MCF 10A (cell line): ENCODE measurements at regions of chr6 and their contacts with region 1.

Region 1: GRCh38 chr6:51350308-51350904 is 531.7 kb downstream of the TFAP2B start:
- DNase-seq: peak; percentile 30
- H3K4me3 Mint-ChIP-seq: no peak overlapping the region
- H3K27ac Mint-ChIP-seq: no peak overlapping the region
- H3K4me1 Mint-ChIP-seq: peaks cover 6% of the 10 kb centered on the region
- H3K27me3 Mint-ChIP-seq: no peaks in the 10 kb centered on the region
- CTCF ChIP-seq: peak; percentile 46

Region 2: GRCh38 chr6:51513891-51514747 is 163.7 kb after region 1 on chr6:
- CTCF ChIA-PET with region 1: interaction called, 26 read pairs
- POLR2A ChIA-PET with region 1: no interaction called
- intact Hi-C with region 1: loop called (anchors 10 kb)
- DNase-seq: peak; percentile 77
- H3K4me3 Mint-ChIP-seq: peak overlapping the region; percentile 58
- H3K27ac Mint-ChIP-seq: peak overlapping the region; percentile 83
- H3K4me1 Mint-ChIP-seq: peaks cover 16% of the 10 kb centered on the region
- H3K27me3 Mint-ChIP-seq: no peaks in the 10 kb centered on the region
- CTCF ChIP-seq: no peak

Region 3: DNA sequence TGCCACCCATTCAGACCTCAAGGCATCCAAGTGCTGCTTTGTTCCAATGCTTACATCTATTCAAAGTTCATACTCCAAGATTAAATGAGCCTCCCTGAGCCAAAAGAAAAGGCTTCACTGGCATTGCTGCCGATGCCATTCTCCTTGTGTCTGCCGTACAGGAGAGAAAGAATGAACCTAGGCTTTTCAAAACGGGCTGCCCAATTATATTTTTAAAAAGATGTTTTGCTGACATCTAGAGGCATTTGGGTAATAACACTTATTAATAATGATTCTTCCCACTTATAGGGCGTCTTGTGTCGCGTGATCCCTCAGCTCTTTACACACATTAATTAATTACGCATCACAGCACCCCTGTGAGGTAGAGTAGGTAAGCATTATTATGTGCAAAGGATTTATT is 191.4 kb after region 1 on chr6:
- CTCF ChIA-PET with region 1: interaction called, 18 read pairs
- POLR2A ChIA-PET with region 1: no interaction called
- intact Hi-C with region 1: loop called (anchors 5 kb)
- DNase-seq: peak; percentile 36
- H3K4me3 Mint-ChIP-seq: no peak overlapping the region
- H3K27ac Mint-ChIP-seq: no peak overlapping the region
- H3K4me1 Mint-ChIP-seq: peaks cover 7% of the 10 kb centered on the region
- H3K27me3 Mint-ChIP-seq: peaks cover 16% of the 10 kb centered on the region
- CTCF ChIP-seq: peak; percentile 48